Sciatic nerve (tissue), 2 donors: ENCODE measurements at regions of chr17 and their contacts with region 1.

Region 1: GRCh38 chr17:81484195-81484979 is 28.2 kb downstream of the ACTG1 start:
- DNase-seq: peak; percentile 93
- ATAC-seq: peak; percentile 47

Region 2: DNA sequence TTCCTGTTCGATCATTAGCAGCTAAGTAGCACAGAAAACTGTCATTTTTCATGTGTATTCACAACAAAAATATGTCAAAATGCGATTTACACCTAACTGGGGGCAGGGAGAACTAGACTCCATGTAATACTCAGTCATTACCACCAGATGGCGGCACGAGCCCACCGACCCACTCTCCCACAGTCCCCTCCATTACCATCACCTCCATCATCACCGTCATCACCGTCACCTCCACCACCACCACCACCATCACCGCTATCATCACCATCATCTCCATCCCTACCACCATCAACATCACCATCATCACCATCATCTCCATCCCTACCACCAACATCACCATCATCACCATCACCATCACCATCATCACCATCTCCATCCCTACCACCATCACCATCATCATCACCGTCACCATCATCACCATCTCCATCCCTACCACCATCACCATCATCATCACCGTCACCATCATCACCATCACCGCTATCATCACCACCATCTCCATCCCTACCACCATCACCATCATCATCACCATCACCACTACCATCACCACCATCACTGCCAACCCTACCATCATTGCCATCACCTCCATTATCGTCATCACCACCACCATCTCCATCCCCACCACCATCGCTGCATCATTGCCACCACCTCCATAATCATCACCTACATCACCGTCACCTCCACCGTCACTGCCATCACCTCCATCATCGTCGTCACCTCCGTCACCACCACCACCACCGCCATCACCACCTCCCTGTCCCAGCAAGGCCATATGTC is 230.8 kb before region 1 on chr17:
- intact Hi-C with region 1: loop called (anchors 1 kb)
- DNase-seq: no peak
- ATAC-seq: peak; percentile 56

Region 3: DNA sequence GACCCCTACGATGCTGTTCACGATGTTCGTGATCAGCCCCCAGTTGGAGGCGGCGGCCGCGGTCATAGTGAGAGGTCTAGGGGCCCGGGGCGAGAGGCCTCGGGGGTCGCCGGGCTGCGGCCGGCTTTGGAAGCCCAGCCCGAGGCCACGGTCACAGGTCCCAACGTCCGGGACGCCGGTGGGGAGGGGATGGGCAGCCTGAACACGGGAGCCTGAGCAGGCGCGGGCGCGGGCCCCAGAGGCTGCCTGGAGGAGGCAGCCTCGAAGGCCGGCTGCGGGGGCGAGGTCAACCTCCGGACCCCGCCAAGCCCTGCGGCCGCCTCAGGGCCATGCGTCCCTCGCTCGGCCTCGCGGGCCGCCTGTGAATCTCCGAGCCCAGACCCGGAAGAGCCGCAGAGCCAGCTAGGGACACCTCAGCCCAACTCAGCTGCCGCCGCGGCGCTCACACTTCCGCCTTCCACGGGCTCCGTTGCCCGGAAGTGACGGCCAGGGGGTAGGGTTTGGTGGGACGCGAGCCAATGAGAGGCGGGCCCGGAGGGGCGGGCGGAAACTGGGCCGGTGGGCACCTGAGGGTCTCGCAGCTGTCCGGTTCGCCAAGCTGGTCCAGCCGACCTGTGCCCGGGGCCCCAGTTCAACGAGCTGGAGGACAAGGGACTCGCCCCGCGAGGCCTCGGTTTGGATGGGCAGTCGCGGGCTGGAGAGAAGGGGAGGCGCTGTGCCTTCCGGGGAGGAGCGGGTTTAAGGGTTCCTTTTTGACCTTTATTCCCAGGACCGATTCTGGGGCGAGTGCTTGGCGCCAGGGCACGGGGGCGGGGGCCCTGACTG is 189.3 kb before region 1 on chr17 and contains the start of gene SLC38A10:
- intact Hi-C with region 1: loop called (anchors 5 kb)
- DNase-seq: peak; percentile 96
- ATAC-seq: peak; percentile 95
- total RNA-seq, gene SLC38A10: 61.6 TPM